Adrenal gland (tissue), 19 donors: ENCODE measurements at regions of chr1 and their contacts with region 1.

Region 1: GRCh38 chr1:111719674-111720132 is 19.5 kb downstream of the INKA2 start:
- DNase-seq: peak in 4 of 7 donors; percentile 30 to 70 (median 46)
- H3K4me3 ChIP-seq: no peak overlapping the region
- H3K27ac ChIP-seq: no peak overlapping the region
- H3K4me1 ChIP-seq: no peaks in the 10 kb centered on the region
- H3K27me3 ChIP-seq: no peaks in the 10 kb centered on the region
- CTCF ChIP-seq: no peak
- POLR2A ChIP-seq: no peak

Region 2: DNA sequence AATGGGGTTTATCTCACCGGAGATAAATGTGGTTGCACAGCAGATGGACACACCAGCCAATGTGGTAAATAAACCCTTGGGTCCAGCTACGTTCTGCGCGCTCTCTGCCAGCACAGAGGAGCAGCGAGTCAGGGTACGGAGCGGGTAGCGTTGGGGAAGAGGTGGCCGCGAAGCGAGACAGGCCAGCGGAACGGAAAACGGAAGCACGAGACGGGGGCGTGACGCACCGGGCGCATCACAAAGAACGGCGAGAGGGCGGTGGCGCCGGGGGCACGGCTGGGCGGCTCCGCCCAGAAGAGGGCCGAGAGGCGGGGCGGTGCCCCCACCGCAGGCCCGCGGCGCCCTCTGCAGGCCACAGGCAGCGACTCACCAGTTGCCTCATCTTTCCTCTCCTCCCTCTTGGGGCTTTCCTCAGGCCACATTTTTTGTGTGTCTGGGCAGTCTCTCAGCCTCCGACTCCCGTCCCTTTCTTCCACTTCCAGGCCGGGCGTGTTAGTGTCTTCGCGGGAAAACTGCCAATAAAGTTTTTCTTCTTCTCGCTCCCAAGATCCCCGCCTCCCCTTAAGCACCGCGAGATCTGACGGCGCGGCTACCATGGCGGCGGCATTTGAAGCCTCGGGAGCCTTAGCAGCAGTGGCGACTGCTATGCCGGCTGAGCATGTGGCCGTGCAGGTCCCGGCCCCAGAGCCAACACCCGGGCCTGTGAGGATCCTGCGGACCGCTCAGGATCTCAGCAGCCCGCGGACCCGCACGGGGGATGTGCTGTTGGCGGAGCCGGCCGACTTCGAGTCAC is 35.8 kb after region 1 on chr1 and contains the start of gene DDX20:
- intact Hi-C with region 1: loop called (anchors 5 kb)
- DNase-seq: peak; percentile 92 to 96 (median 94)
- H3K4me3 ChIP-seq: peak within 1 kb of the TSS; percentile 32 to 93 (median 70)
- H3K27ac ChIP-seq: peak within 1 kb of the TSS; percentile 78 to 94 (median 85)
- H3K4me1 ChIP-seq: peaks cover 6 to 18% of the 10 kb centered on the region in 2 donors
- H3K27me3 ChIP-seq: no peaks in the 10 kb centered on the region
- CTCF ChIP-seq: peak; percentile 47 to 90 (median 84)
- POLR2A ChIP-seq: peak; percentile 62 to 70
- total RNA-seq, gene DDX20: 7.3 to 19.9 (median 12.0) TPM